ENCODE measurements at regions of chr4 and their contacts with region 1.

Region 1: GRCh38 chr4:17597517-17597916 is 16.9 kb upstream of the MED28 start:
- DNase-seq: no peak
- CTCF ChIP-seq: no peak

Region 2: GRCh38 chr4:17576932-17577665 is 20.4 kb before region 1 on chr4 and contains the start of gene LAP3:
- CTCF ChIA-PET with region 1: interaction called, 11 read pairs
- POLR2A ChIA-PET with region 1: interaction called, 3 read pairs
- DNase-seq: peak; percentile 95
- CTCF ChIP-seq: no peak

Region 3: DNA sequence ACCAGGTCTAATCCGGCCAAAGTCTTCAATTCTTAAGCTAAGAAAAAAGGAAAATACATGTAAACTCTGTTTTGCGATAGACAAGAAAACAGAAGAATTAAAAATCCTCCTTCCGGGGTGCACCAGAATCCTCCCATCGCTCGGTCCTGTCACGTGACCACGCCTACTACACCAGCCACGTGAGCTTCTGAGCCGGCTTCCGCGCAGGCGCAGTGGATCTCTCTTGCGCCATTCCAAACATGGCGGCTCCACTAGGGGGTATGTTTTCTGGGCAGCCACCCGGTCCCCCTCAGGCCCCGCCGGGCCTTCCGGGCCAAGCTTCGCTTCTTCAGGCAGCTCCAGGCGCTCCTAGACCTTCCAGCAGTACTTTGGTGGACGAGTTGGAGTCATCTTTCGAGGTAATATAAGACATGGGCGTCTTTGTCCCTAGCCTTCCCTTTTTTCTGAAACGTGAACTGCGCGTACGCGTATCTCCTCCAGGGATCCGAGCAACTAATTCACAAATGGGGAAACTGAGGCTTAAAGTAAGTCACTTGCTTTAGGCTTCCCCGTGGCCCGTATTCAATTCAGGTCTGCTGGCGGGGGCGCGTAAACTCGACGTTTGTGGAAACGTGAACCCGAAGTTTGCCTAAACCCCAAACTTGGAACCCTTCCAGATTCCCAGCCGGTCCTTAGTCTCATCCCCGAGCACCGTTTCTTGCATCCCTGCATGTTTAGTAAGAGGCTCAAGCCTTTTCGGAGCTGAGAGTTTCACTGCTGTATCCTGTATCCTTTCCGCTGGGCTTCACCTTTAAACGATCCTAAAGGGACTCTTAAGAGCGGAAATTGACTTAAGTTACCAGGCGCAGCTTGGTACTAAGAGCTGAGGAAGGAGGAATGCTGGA is 17.1 kb after region 1 on chr4 and contains the start of gene MED28:
- CTCF ChIA-PET with region 1: interaction called, 13 read pairs
- POLR2A ChIA-PET with region 1: interaction called, 4 read pairs
- DNase-seq: peak; percentile 98
- CTCF ChIP-seq: no peak

Measured in GM10248 (cell line).